ENCODE measurements at regions of chr7 and their contacts with region 1.

Region 1: DNA sequence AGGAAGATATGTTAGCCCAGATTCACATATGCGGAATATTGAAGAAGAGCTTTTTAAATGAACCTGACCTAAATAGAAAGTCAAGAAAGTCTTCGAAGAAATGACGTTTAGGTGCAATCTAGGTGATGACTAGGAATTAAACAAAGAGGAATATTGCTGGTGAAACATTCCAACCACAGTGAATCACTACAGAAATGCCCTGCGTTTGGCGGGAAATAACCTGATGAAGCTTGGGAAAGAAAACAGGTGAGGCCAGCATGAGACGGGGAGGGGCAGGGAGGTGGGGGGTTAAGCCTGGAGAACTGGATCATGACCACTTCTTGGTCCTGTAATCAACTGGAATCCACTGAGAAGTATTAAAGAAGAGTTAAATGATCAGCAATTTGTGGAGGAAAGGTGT is 299.4 kb upstream of the VSTM2A start:
- DNase-seq: no peak
- ATAC-seq: no peak
- H3K4me3 ChIP-seq: no peak overlapping the region
- H3K27ac ChIP-seq: no peak overlapping the region
- H3K4me1 ChIP-seq: no peaks in the 10 kb centered on the region
- H3K27me3 ChIP-seq: no peaks in the 10 kb centered on the region

Region 2: GRCh38 chr7:54326592-54327167 is 83.9 kb after region 1 on chr7:
- intact Hi-C with region 1: loop called in 2 of 4 experiments (anchors 10 kb)
- DNase-seq: no peak
- ATAC-seq: no peak
- H3K4me3 ChIP-seq: no peak overlapping the region
- H3K27ac ChIP-seq: no peak overlapping the region
- H3K4me1 ChIP-seq: no peaks in the 10 kb centered on the region
- H3K27me3 ChIP-seq: no peaks in the 10 kb centered on the region

Region 3: GRCh38 chr7:54339073-54339472 is 96.3 kb after region 1 on chr7:
- intact Hi-C with region 1: loop called in 1 of 4 experiments (anchors 10 kb)
- DNase-seq: no peak
- ATAC-seq: no peak
- H3K4me3 ChIP-seq: no peak overlapping the region
- H3K27ac ChIP-seq: no peak overlapping the region
- H3K4me1 ChIP-seq: no peaks in the 10 kb centered on the region
- H3K27me3 ChIP-seq: no peaks in the 10 kb centered on the region

Measured in right cardiac atrium (tissue), 5 donors.